ENCODE measurements at regions of chr15 and their contacts with region 1.

Region 1: DNA sequence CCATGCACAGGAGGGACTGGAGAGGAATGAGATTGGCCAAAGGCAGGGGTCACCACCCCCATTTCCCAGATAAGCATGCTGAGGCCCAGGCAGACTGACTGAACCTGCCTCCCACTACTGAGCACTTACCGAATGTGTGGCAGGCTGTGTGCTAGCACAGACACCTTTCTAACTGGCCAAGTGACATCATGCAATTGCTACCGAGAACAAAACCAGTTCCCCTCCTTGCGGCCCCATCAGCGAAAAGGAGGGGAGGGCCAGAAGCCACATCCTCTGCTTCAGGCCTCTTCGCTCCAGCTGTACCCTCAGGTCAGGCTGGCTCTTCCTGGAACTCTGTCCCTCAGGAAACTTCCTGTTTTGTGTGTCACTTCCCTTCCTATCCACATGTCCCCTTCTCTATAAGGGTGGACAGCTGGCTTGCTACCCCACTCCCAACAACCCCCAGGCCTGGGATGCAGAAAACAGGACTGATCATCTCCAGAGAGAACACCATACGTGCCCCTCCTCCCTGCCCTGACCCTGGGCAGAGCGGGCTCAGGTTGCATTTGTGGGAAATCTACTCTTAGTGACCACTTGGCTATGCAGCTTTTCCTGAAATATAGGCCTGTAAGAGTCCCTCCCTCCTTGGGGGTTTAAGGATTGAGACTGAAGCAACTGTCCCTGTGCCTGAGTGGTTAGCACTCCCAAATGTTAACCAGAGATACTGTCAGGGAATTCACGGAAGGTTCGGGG is 11.6 kb downstream of the SH2D7 start:
- DNase-seq: peak; percentile 73
- ATAC-seq: peak; percentile 84
- H3K4me3 Mint-ChIP-seq: peak overlapping the region; percentile 82
- H3K27ac Mint-ChIP-seq: peak overlapping the region; percentile 95
- H3K4me1 Mint-ChIP-seq: peaks cover 73% of the 10 kb centered on the region
- H3K27me3 Mint-ChIP-seq: no peaks in the 10 kb centered on the region

Region 2: GRCh38 chr15:78034495-78035191 is 69.3 kb before region 1 on chr15:
- POLR2A ChIA-PET with region 1: interaction called, 18 read pairs
- DNase-seq: peak; percentile 77
- ATAC-seq: peak; percentile 89
- H3K4me3 Mint-ChIP-seq: peak overlapping the region; percentile 69
- H3K27ac Mint-ChIP-seq: peak overlapping the region; percentile 71
- H3K4me1 Mint-ChIP-seq: peaks cover 68% of the 10 kb centered on the region
- H3K27me3 Mint-ChIP-seq: no peaks in the 10 kb centered on the region

Region 3: DNA sequence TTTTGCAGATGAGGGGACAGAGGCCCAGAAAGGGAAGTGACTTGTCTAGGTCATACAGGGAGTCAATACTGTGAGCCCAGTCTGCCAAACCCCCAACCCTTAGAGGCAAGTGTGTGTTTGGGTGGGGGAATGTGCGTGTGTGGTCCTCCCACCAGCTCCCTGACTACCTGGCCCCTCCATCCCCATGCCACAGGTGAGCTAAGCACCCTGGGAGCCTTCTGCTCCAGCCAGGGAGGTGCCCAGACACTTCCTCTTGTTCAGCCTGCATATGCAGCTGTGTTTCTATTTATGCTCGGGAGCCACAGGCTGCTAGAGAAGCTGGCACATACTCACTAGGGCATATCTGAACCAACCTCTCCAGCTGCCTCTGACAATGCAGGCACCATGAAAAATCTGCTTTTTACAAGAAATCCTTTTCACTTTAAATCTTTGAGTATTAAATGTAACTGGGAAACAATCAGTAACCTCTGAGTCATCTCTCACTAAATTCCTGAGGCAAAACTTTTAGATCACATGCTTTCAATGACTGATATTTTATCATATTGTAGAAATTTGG is 47.1 kb before region 1 on chr15:
- POLR2A ChIA-PET with region 1: no interaction called
- DNase-seq: no peak
- ATAC-seq: peak; percentile 34
- H3K4me3 Mint-ChIP-seq: peak overlapping the region; percentile 29
- H3K27ac Mint-ChIP-seq: peak overlapping the region; percentile 81
- H3K4me1 Mint-ChIP-seq: peaks cover 66% of the 10 kb centered on the region
- H3K27me3 Mint-ChIP-seq: no peaks in the 10 kb centered on the region

Region 4: DNA sequence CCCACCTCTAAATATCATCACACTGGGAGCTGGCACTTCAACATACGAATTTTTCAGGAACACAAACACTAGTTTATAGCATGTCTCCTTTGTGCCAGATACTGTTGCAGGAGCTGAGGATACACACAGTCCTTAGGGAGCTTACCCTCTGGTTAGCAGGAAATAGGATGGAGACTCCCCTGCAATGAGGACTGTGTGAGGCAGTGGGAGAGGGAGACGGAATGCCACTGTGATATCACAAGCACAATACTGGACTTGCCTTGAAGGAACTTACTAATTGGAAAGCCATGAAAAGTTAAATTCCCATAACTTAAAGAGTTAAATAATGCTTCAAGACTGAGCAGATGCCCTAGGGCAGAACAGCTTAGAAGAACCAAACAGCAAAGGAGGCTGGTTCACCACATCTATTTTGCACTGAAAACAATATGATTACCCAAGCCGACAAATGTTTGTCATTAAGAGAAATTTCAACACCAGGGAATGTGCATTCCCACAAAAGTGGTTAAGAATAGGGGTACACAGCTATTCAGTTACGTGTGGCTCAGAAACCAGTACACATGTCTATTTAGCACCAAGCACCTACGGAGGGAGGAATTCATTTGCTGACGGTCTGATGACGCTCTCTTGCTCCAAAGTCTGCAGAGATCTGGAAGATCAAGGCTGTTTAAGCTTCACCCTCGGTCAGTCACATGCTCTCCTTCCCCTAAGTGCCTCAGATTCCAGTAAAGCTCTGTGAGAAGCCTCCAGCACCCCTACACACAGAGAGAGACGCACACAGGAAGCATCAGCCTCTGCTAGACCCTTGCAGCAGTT is 31.6 kb before region 1 on chr15:
- POLR2A ChIA-PET with region 1: interaction called, 33 read pairs
- DNase-seq: no peak
- ATAC-seq: peak; percentile 17
- H3K4me3 Mint-ChIP-seq: peak overlapping the region; percentile 79
- H3K27ac Mint-ChIP-seq: peak overlapping the region; percentile 49
- H3K4me1 Mint-ChIP-seq: peaks cover 68% of the 10 kb centered on the region
- H3K27me3 Mint-ChIP-seq: no peaks in the 10 kb centered on the region

Region 5: GRCh38 chr15:78082106-78083078 is 21.5 kb before region 1 on chr15:
- POLR2A ChIA-PET with region 1: interaction called, 16 read pairs
- DNase-seq: no peak
- ATAC-seq: no peak
- H3K4me3 Mint-ChIP-seq: no peak overlapping the region
- H3K27ac Mint-ChIP-seq: peak overlapping the region; percentile 74
- H3K4me1 Mint-ChIP-seq: peaks cover 33% of the 10 kb centered on the region
- H3K27me3 Mint-ChIP-seq: no peaks in the 10 kb centered on the region

Region 6: GRCh38 chr15:78093242-78094020 is 10.5 kb before region 1 on chr15:
- POLR2A ChIA-PET with region 1: interaction called, 31 read pairs
- DNase-seq: no peak
- ATAC-seq: peak; percentile 74
- H3K4me3 Mint-ChIP-seq: peak overlapping the region; percentile 47
- H3K27ac Mint-ChIP-seq: peak overlapping the region; percentile 46
- H3K4me1 Mint-ChIP-seq: peaks cover 41% of the 10 kb centered on the region
- H3K27me3 Mint-ChIP-seq: no peaks in the 10 kb centered on the region

Measured in activated naive CD8-positive, alpha-beta T cell treated with anti-CD3 and anti-CD28 coated beads, Interleukin-2, amount 10 ng/mL, durations not matched to agents 7 days and 5 days (primary cell).